Heart right ventricle (tissue), 16 donors: ENCODE measurements at regions of chr2 and their contacts with region 1.

Region 1: DNA sequence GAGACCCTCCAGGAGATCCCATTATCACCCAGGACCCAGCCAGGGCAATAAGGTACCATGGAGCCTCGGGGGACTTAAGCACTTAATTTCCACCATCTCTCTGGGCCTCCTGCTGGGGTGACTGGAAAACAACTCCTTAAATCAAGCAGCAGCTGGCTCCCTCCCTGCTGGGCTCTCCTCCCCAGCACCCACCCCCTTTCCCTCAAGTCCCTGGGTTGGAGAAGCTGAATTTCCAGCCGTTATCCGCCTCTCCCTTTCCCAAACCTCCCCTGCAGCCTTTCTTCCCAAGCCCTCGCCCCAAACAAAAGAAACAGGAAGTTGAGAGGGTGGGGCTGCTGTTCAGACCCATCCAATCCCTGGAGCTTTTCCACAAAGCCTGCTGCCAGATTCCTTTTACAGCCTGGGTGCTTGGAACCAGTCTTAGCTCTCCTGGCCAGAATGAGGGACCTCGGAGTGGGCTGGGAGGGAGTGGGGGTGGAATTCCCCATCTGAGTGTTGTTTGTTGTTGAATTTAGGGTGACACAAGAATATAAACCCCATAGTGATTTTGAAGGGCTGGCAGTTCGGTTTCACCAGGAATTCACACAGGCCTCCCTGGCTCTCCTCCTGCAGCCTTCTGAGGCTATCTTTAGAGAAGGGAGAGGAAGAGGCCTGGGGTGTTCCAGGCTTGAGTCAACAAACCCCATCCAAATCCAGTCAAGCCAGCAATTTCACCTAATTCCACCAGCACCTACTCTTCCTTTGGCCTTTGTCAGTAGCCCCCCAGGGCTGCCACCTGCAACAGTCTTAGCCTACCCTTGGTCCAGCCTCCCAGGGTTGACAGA is 32.3 kb downstream of the MARCHF4 start:
- DNase-seq: peak in 1 of 2 donors; percentile 68
- ATAC-seq: peak; percentile 76 to 94 (median 84)
- H3K4me3 ChIP-seq: peak overlapping the region in 1 of 10 donors; percentile 7
- H3K27ac ChIP-seq: peak overlapping the region in 9 of 10 donors; percentile 10 to 80 (median 59)
- H3K4me1 ChIP-seq: peaks cover 9 to 30% (median 19%) of the 10 kb centered on the region in 9 donors
- H3K27me3 ChIP-seq: peaks cover 0 to 6% (median 0%) of the 10 kb centered on the region in 7 donors
- CTCF ChIP-seq: peak in 2 of 9 donors; percentile 36 to 43

Region 2: DNA sequence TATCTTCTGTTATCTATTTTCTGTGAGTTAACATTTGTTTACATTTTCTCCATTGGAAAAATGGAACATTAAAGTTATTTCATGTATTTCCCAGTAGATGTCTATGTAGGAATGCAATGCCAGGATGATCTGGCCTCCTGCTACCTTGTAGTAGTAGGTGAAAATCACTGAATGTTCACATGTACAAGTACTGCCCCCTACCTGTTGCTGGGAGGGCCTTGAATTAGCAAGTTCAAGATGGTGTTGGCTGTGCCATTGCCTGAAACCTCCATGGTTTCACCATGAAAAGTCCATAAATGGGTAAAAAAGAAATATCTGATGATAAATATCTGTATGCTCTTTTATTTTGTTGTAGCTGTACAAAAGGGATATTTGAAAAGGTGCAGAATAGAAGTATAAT is 200.1 kb before region 1 on chr2:
- intact Hi-C with region 1: no loop called
- DNase-seq: no peak
- ATAC-seq: no peak
- H3K4me3 ChIP-seq: no peak overlapping the region
- H3K27ac ChIP-seq: no peak overlapping the region
- H3K4me1 ChIP-seq: no peaks in the 10 kb centered on the region
- H3K27me3 ChIP-seq: no peaks in the 10 kb centered on the region
- CTCF ChIP-seq: peak in 6 of 9 donors; percentile 15 to 40 (median 28)

Region 3: GRCh38 chr2:216215658-216216390 is 124.2 kb before region 1 on chr2:
- intact Hi-C with region 1: loop called in 1 of 10 experiments (anchors 2 kb)
- DNase-seq: no peak
- ATAC-seq: no peak
- H3K4me3 ChIP-seq: no peak overlapping the region
- H3K27ac ChIP-seq: no peak overlapping the region
- H3K4me1 ChIP-seq: peaks cover 0 to 29% (median 8%) of the 10 kb centered on the region in 9 donors
- H3K27me3 ChIP-seq: no peaks in the 10 kb centered on the region
- CTCF ChIP-seq: peak in 1 of 9 donors; percentile 5